ENCODE measurements at regions of chr13 and their contacts with region 1.

Region 1: GRCh38 chr13:99269627-99270241 is 11.6 kb upstream of the GPR18 start:
- DNase-seq: peak in 2 of 4 experiments; percentile 23 to 56
- ATAC-seq: peak; percentile 86
- H3K4me3 ChIP-seq: no peak overlapping the region
- H3K27ac ChIP-seq: no peak overlapping the region
- H3K4me1 ChIP-seq: peaks cover 7 to 24% of the 10 kb centered on the region in 2 experiments; a peak in 3 of 5 replicates
- H3K27me3 ChIP-seq: no peaks in the 10 kb centered on the region
- CTCF ChIP-seq: peak; percentile 66 to 81 (median 66); a peak in 5 of 6 replicates
- EP300 ChIP-seq: no peak
- POLR2A ChIP-seq: no peak
- RAD21 ChIP-seq: peak; percentile 80 to 87

Region 2: DNA sequence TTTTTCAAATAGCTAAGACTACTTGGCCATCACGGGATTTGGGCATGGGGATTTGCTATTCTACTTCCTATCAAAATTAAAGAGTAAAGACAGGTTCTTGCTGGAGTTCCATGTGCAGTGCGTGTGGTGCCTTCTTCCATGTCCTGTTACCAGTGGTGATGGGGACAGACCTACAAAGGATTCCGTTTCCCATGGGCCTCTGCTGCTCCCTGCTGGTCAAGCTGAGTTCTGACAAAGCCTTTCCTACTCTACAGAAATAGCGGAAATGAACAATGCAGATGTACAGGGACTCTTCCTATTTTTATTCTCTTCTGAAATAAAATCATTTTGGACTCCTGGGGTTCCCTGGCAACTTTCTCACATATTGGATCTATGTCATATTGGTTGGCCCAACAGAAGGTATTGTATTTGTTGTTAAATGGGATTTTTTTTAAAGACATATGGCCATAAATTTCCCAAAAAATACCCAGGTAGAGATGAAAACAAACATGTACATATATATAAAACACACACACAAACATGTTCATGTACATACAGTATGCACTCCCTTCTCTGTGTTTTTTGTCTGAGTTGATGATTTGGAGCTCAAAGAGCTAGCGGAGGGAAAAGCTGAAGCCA is 426.8 kb before region 1 on chr13:
- CTCF ChIA-PET with region 1: no interaction called
- POLR2A ChIA-PET with region 1: no interaction called
- in situ Hi-C with region 1: no loop called
- intact Hi-C with region 1: loop called (anchors 10 kb)
- DNase-seq: peak; percentile 48 to 71 (median 56)
- ATAC-seq: peak; percentile 90
- H3K4me3 ChIP-seq: no peak overlapping the region
- H3K27ac ChIP-seq: no peak overlapping the region
- H3K4me1 ChIP-seq: peaks cover 0 to 4% of the 10 kb centered on the region in 2 experiments; a peak in 1 of 5 replicates
- H3K27me3 ChIP-seq: no peaks in the 10 kb centered on the region
- CTCF ChIP-seq: peak; percentile 67 to 82 (median 77)
- EP300 ChIP-seq: no peak
- POLR2A ChIP-seq: no peak
- RAD21 ChIP-seq: peak; percentile 57 to 64

Region 3: GRCh38 chr13:99190147-99190985 is 79.4 kb before region 1 on chr13:
- CTCF ChIA-PET with region 1: no interaction called
- POLR2A ChIA-PET with region 1: no interaction called
- in situ Hi-C with region 1: no loop called
- intact Hi-C with region 1: no loop called
- DNase-seq: no peak
- ATAC-seq: no peak
- H3K4me3 ChIP-seq: no peak overlapping the region
- H3K27ac ChIP-seq: no peak overlapping the region
- H3K4me1 ChIP-seq: peaks cover 0 to 4% of the 10 kb centered on the region in 2 experiments; a peak in 3 of 5 replicates
- H3K27me3 ChIP-seq: no peaks in the 10 kb centered on the region
- CTCF ChIP-seq: no peak
- EP300 ChIP-seq: no peak
- POLR2A ChIP-seq: no peak
- RAD21 ChIP-seq: no peak

Region 4: GRCh38 chr13:99200432-99201167 is 69.1 kb before region 1 on chr13 and contains the start of gene UBAC2:
- CTCF ChIA-PET with region 1: no interaction called
- POLR2A ChIA-PET with region 1: interaction called, 3 read pairs
- in situ Hi-C with region 1: no loop called
- intact Hi-C with region 1: loop called (anchors 5 kb)
- DNase-seq: peak; percentile 93 to 96 (median 94)
- ATAC-seq: peak; percentile 90
- H3K4me3 ChIP-seq: peak within 1 kb of the TSS; percentile 93
- H3K27ac ChIP-seq: peak within 1 kb of the TSS; percentile 95
- H3K4me1 ChIP-seq: peaks cover 13 to 27% of the 10 kb centered on the region in 2 experiments; a peak in 4 of 5 replicates
- H3K27me3 ChIP-seq: no peaks in the 10 kb centered on the region
- CTCF ChIP-seq: 0 out of 6 replicates have a peak, but pooled peaks of 1 of the 3 experiments have one; percentile 3
- EP300 ChIP-seq: no peak
- POLR2A ChIP-seq: peak; percentile 98
- RAD21 ChIP-seq: no peak
- polyA plus RNA-seq, gene UBAC2: 6.0 to 19.0 TPM

Region 5: DNA sequence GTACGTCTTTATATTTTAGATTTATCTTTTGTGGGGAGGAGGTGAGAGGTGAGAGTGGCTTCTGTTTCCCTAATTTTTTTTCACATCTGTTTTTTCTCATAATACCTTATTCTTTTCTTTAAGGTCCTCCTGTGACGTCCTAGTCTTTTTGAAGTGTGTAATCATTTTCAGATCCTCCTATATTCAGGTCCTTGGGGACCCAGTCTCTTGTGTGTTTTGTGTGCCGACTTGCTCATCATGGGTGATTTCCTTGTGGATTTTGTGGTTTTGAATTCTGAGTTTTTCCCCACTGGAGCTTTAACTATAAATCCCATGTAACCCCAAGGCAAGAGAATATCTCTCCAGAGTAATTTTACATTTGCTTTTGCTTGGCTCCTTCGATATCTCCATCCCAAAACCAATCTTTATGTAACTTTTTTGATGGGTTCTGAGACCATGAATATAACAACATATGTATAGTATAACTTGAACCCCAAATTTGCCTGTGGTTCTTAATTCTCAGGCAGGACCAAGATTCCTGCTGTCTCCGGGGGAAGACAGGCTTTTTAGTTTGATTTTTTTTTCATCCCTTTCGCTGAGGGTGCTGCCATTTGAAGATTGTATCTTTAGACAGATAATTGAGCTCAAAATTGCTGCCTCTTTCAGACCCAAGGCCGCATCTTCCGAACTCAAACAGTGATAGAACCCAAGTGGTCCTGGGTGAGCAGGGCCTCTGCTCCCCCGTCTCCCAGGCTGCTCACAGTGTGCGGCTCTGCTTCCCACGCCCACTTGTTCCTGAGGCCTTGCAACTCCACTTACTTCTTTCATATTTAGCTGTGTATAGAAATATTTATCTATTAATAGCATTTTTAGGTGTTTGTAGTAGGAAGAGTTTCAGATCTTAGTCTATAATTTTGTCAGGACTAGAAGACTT is 96.6 kb after region 1 on chr13:
- CTCF ChIA-PET with region 1: interaction called, 5 read pairs
- POLR2A ChIA-PET with region 1: interaction called, 3 read pairs
- in situ Hi-C with region 1: no loop called
- intact Hi-C with region 1: loop called (anchors 5 kb)
- DNase-seq: no peak
- ATAC-seq: no peak
- H3K4me3 ChIP-seq: no peak overlapping the region
- H3K27ac ChIP-seq: no peak overlapping the region
- H3K4me1 ChIP-seq: no peaks in the 10 kb centered on the region
- H3K27me3 ChIP-seq: no peaks in the 10 kb centered on the region
- CTCF ChIP-seq: no peak
- EP300 ChIP-seq: no peak
- POLR2A ChIP-seq: no peak
- RAD21 ChIP-seq: no peak

Region 6: DNA sequence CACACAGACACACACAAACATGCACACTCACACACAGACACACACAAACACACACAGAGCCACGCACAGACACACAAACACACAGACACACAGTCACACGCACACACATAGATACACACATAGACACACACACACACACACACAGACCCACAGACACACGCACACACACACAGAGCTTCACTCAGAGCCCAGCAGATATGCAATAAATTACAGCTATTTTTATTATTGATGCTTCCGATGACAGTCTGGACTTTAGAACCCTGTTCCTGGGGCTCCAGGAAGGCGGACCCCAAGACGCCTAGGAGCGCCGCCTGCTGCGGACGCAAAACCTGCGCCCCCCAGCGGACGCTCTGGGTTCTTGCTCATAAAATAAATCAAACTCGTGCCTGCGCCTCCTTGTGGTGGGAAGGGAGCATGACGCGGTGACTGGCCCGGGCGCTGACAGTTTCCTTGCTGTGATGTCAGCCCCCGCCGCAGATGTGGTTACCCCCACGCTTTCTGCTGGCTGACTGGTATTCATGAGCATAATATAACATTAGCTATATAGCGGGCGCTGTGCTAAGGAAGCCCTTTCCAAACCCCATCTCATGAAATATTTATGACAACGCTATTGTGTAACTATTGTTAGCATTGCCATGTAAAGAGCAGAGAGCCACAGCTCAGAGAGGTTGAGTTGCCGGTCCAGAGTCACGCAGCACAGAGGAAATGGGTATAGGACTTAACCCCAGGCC is 167.1 kb after region 1 on chr13:
- CTCF ChIA-PET with region 1: interaction called, 73 read pairs
- POLR2A ChIA-PET with region 1: interaction called, 4 read pairs
- in situ Hi-C with region 1: loop called (anchors 5 kb)
- intact Hi-C with region 1: loop called (anchors 1 kb)
- DNase-seq: peak; percentile 75 to 89 (median 76)
- ATAC-seq: peak; percentile 76
- H3K4me3 ChIP-seq: no peak overlapping the region
- H3K27ac ChIP-seq: no peak overlapping the region; the same call in 2 of the 3 replicates
- H3K4me1 ChIP-seq: peaks cover 23 to 28% of the 10 kb centered on the region in 2 experiments; a peak in 4 of 5 replicates
- H3K27me3 ChIP-seq: peaks cover 0 to 13% of the 10 kb centered on the region in 2 experiments; a peak in 2 of 5 replicates
- CTCF ChIP-seq: peak; percentile 99 to 100 (median 100)
- EP300 ChIP-seq: 0 out of 2 replicates have a peak, but pooled peaks have one; percentile 6
- POLR2A ChIP-seq: no peak
- RAD21 ChIP-seq: peak; percentile 92 to 95

Measured in K562 (cell line).